ENCODE measurements at regions of chr16 and their contacts with region 1.

Region 1: GRCh38 chr16:21158208-21159110 is at the start of gene LDAF1:
- DNase-seq: peak; percentile 85
- H3K4me3 ChIP-seq: peak within 1 kb of the TSS; percentile 80
- H3K27ac ChIP-seq: peak within 1 kb of the TSS; percentile 40
- H3K4me1 ChIP-seq: peaks cover 17% of the 10 kb centered on the region
- CTCF ChIP-seq: no peak
- total RNA-seq, gene LDAF1: 5.4 and 5.8 TPM in 2 replicates

Region 2: GRCh38 chr16:21300309-21301167 is 142.1 kb after region 1 on chr16:
- CTCF ChIA-PET with region 1: interaction called, 4 read pairs
- POLR2A ChIA-PET with region 1: interaction called, 5 read pairs
- intact Hi-C with region 1: loop called (anchors 1 kb)
- DNase-seq: peak; percentile 87
- H3K4me3 ChIP-seq: peak overlapping the region; percentile 81
- H3K27ac ChIP-seq: peak overlapping the region; percentile 69
- H3K4me1 ChIP-seq: peaks cover 25% of the 10 kb centered on the region
- CTCF ChIP-seq: peak; percentile 91

Region 3: DNA sequence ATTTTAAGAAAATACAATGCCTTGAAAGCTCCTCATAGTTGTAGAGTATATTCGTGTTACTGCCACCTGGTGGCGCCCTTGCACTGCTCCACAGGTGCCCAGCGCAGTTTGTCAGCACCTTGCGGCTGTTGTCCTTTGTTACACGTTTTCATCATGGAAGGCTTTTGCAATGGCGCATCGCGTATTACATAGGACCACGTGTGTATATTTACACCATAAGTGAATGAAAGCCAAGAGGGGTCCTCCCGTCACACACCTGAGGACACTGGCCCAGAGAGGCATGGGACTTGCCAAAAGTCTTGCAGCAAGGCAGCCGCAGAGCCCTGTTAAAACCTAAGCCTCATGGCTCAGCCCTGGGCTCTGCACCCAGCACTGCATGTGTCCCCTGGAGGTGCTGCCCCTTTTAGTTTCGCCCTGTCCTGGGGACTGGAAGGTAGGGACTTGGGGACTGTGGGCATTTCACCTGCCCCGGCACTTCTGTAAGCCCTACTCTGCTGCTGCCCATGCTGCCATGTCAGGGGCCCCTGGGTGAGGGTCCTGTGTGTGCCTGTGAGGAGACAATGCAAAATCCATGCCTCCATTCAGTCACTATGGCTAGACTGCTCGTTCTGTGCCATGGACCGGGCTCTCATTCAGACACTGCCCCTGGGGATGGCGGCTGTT is 1163.0 kb after region 1 on chr16:
- CTCF ChIA-PET with region 1: no interaction called
- POLR2A ChIA-PET with region 1: no interaction called
- intact Hi-C with region 1: loop called (anchors 5 kb)
- DNase-seq: peak; percentile 83
- H3K4me3 ChIP-seq: no peak overlapping the region
- H3K27ac ChIP-seq: no peak overlapping the region
- H3K4me1 ChIP-seq: no peaks in the 10 kb centered on the region
- CTCF ChIP-seq: peak; percentile 99

Measured in OCI-LY7 (cell line).